ENCODE measurements at regions of chr5 and their contacts with region 1.

Region 1: DNA sequence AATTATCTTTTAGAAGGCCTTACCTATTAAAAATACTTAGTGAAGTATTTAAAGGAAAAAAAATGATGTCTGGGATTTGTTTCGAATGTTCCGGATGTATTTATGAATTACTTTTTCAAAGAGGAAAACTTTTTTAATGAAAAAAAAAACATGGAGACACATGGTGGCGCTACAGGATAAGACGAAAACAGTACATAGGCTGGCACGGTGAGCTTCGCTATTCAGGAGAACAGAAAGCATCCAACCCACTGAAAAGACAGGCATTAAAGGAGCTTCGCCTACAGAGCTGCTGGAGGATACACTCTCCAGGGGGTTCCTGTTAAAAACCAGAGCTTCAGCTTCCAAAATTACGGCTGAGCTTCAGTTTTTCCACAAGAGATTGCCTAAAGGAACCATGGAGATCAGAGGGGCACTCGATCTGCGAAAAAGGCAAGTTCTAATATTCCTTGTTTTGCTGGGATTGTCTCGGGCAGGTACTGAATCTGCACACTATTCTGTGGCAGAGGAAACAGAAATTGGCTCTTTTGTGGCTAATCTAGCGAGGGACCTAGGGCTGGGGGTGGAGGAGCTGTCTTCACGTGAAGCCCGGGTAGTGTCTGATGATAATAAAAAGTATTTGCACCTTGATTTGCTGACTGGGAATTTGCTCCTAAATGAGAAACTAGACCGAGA is at the start of gene PCDHB14:
- DNase-seq: no peak
- ATAC-seq: peak; percentile 100
- H3K4me3 Mint-ChIP-seq: peak within 1 kb of the TSS; percentile 62
- H3K27ac Mint-ChIP-seq: peak within 1 kb of the TSS; percentile 19; the same call in 1 of the 2 replicates
- H3K4me1 Mint-ChIP-seq: peaks cover 11% of the 10 kb centered on the region
- H3K27me3 Mint-ChIP-seq: no peaks in the 10 kb centered on the region; the same call in none of the 2 replicates
- CTCF ChIP-seq: no peak
- total RNA-seq, gene PCDHB14: 2.6 to 3.5 TPM (median 2.8 TPM) in 3 replicates

Region 2: GRCh38 chr5:141121563-141121962 is 101.7 kb before region 1 on chr5 and contains the start of gene PCDHB4:
- CTCF ChIA-PET with region 1: interaction called, 14 read pairs
- POLR2A ChIA-PET with region 1: no interaction called
- DNase-seq: peak; percentile 69
- ATAC-seq: peak; percentile 73
- H3K4me3 Mint-ChIP-seq: peak within 1 kb of the TSS; percentile 51
- H3K27ac Mint-ChIP-seq: no peak within 1 kb of the TSS
- H3K4me1 Mint-ChIP-seq: no peaks in the 10 kb centered on the region
- H3K27me3 Mint-ChIP-seq: no peaks in the 10 kb centered on the region
- CTCF ChIP-seq: peak; percentile 79
- total RNA-seq, gene PCDHB4: 2.3 to 2.6 TPM (median 2.3 TPM) in 3 replicates

Region 3: DNA sequence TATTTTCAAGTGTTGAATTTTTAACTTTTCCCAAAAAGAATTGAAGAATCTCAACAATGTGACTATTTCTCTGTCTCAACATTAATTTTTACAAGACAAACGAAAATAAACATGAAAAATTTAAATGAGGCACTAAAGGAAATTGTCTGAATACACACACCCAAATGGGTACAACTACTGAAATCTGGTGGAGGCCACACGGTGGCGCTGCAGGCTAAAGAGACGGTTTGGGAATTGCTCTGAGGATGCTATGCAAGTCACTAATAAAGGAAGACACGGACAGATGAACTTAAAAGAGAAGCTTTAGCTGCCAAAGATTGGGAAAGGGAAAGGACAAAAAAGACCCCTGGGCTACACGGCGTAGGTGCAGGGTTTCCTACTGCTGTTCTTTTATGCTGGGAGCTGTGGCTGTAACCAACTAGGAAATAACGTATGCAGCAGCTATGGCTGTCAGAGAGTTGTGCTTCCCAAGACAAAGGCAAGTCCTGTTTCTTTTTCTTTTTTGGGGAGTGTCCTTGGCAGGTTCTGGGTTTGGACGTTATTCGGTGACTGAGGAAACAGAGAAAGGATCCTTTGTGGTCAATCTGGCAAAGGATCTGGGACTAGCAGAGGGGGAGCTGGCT is 31.0 kb before region 1 on chr5 and contains the start of gene PCDHB10:
- CTCF ChIA-PET with region 1: interaction called, 27 read pairs
- POLR2A ChIA-PET with region 1: no interaction called
- DNase-seq: peak; percentile 89
- ATAC-seq: peak; percentile 88
- H3K4me3 Mint-ChIP-seq: peak within 1 kb of the TSS; percentile 58
- H3K27ac Mint-ChIP-seq: no peak within 1 kb of the TSS
- H3K4me1 Mint-ChIP-seq: peaks cover 4% of the 10 kb centered on the region
- H3K27me3 Mint-ChIP-seq: peaks cover 4% of the 10 kb centered on the region
- CTCF ChIP-seq: peak; percentile 70; the same call in 1 of the 2 replicates
- total RNA-seq, gene PCDHB10: 1.4 to 1.9 TPM (median 1.7 TPM) in 3 replicates

Region 4: GRCh38 chr5:141272906-141273305 is 49.7 kb after region 1 on chr5:
- CTCF ChIA-PET with region 1: interaction called, 19 read pairs
- POLR2A ChIA-PET with region 1: interaction called, 3 read pairs
- DNase-seq: peak; percentile 47
- ATAC-seq: peak; percentile 89
- H3K4me3 Mint-ChIP-seq: no peak overlapping the region
- H3K27ac Mint-ChIP-seq: no peak overlapping the region
- H3K4me1 Mint-ChIP-seq: no peaks in the 10 kb centered on the region
- H3K27me3 Mint-ChIP-seq: no peaks in the 10 kb centered on the region
- CTCF ChIP-seq: no peak

Region 5: GRCh38 chr5:141359790-141360426 is 136.7 kb after region 1 on chr5 and contains the start of gene PCDHGB2:
- CTCF ChIA-PET with region 1: interaction called, 16 read pairs
- POLR2A ChIA-PET with region 1: no interaction called
- DNase-seq: peak; percentile 46
- ATAC-seq: peak; percentile 83
- H3K4me3 Mint-ChIP-seq: peak within 1 kb of the TSS; percentile 60
- H3K27ac Mint-ChIP-seq: peak within 1 kb of the TSS; percentile 96
- H3K4me1 Mint-ChIP-seq: peaks cover 27% of the 10 kb centered on the region
- H3K27me3 Mint-ChIP-seq: peaks cover 22% of the 10 kb centered on the region; the same call in 1 of the 2 replicates
- CTCF ChIP-seq: peak; percentile 65
- total RNA-seq, gene PCDHGB2: 4.1 to 5.5 TPM (median 5.2 TPM) in 3 replicates

Region 6: GRCh38 chr5:141420855-141421496 is 197.7 kb after region 1 on chr5 and contains the start of gene PCDHGA11:
- CTCF ChIA-PET with region 1: interaction called, 23 read pairs
- POLR2A ChIA-PET with region 1: no interaction called
- DNase-seq: peak; percentile 77
- ATAC-seq: peak; percentile 52
- H3K4me3 Mint-ChIP-seq: peak within 1 kb of the TSS; percentile 81
- H3K27ac Mint-ChIP-seq: peak within 1 kb of the TSS; percentile 47
- H3K4me1 Mint-ChIP-seq: peaks cover 26% of the 10 kb centered on the region
- H3K27me3 Mint-ChIP-seq: peaks cover 14% of the 10 kb centered on the region
- CTCF ChIP-seq: peak; percentile 68
- total RNA-seq, gene PCDHGA11: 7.0 to 8.4 TPM (median 7.1 TPM) in 3 replicates